GM12878 (cell line): ENCODE measurements at regions of chr20 and their contacts with region 1.

Region 1: GRCh38 chr20:6898928-6899327 is 131.4 kb downstream of the BMP2 start:
- DNase-seq: no peak
- ATAC-seq: peak; percentile 52
- H3K4me3 ChIP-seq: no peak overlapping the region
- H3K27ac ChIP-seq: no peak overlapping the region
- H3K4me1 ChIP-seq: no peaks in the 10 kb centered on the region
- H3K27me3 ChIP-seq: no peaks in the 10 kb centered on the region; a peak in 1 of 4 replicates
- CTCF ChIP-seq: no peak
- EP300 ChIP-seq: no peak
- POLR2A ChIP-seq: no peak
- RAD21 ChIP-seq: no peak

Region 2: GRCh38 chr20:6756693-6757595 is 142.0 kb before region 1 on chr20:
- CTCF ChIA-PET with region 1: no interaction called
- POLR2A ChIA-PET with region 1: no interaction called
- RAD21 ChIA-PET with region 1: no interaction called
- SMC1A ChIA-PET with region 1: no interaction called
- in situ Hi-C with region 1: no loop called
- intact Hi-C with region 1: no loop called
- DNase-seq: no peak
- ATAC-seq: no peak
- H3K4me3 ChIP-seq: no peak overlapping the region
- H3K27ac ChIP-seq: no peak overlapping the region
- H3K4me1 ChIP-seq: no peaks in the 10 kb centered on the region
- H3K27me3 ChIP-seq: no peaks in the 10 kb centered on the region
- CTCF ChIP-seq: no peak
- EP300 ChIP-seq: no peak
- POLR2A ChIP-seq: no peak
- RAD21 ChIP-seq: no peak

Region 3: DNA sequence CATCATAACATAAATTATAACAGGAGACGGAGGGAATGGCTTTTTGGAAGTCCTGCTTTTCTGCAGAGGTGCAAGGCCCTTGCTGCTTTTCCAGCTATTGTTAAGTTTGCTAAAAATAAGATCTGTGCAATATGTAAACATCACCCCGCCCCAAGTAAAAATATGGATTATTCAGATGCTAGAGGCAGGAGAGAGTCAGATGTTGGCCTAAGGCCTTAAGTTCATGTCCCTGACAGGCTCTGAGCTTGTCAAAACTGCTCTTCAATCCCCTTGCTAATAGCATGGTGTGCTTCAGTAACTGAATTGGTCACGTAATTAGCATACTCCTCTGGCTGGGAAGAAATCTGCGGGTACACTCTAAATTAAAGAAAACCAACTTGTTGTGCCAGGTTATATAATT is 16.1 kb after region 1 on chr20:
- CTCF ChIA-PET with region 1: interaction called, 12 read pairs
- POLR2A ChIA-PET with region 1: interaction called, 18 read pairs
- RAD21 ChIA-PET with region 1: interaction called, 30 read pairs
- SMC1A ChIA-PET with region 1: interaction called, 171 read pairs
- in situ Hi-C with region 1: no loop called
- intact Hi-C with region 1: no loop called
- DNase-seq: no peak
- ATAC-seq: peak; percentile 47
- H3K4me3 ChIP-seq: no peak overlapping the region
- H3K27ac ChIP-seq: no peak overlapping the region
- H3K4me1 ChIP-seq: no peaks in the 10 kb centered on the region
- H3K27me3 ChIP-seq: no peaks in the 10 kb centered on the region
- CTCF ChIP-seq: no peak
- EP300 ChIP-seq: no peak
- POLR2A ChIP-seq: no peak
- RAD21 ChIP-seq: no peak